ENCODE measurements at regions of chr3 and their contacts with region 1.

Region 1: GRCh38 chr3:78660957-78661356 is 1106.8 kb downstream of the ROBO1 start:
- DNase-seq: no peak
- ATAC-seq: no peak
- H3K4me3 ChIP-seq: no peak overlapping the region
- H3K4me3 Mint-ChIP-seq: no peak overlapping the region
- H3K27ac ChIP-seq: no peak overlapping the region
- H3K27ac Mint-ChIP-seq: no peak overlapping the region
- H3K4me1 ChIP-seq: no peaks in the 10 kb centered on the region
- H3K4me1 Mint-ChIP-seq: no peaks in the 10 kb centered on the region
- H3K27me3 ChIP-seq: no peaks in the 10 kb centered on the region
- H3K27me3 Mint-ChIP-seq: no peaks in the 10 kb centered on the region
- CTCF ChIP-seq: no peak

Region 2: GRCh38 chr3:78076379-78076778 is 584.6 kb before region 1 on chr3:
- CTCF ChIA-PET with region 1: no interaction called
- POLR2A ChIA-PET with region 1: no interaction called
- intact Hi-C with region 1: no loop called
- DNase-seq: no peak
- ATAC-seq: no peak
- H3K4me3 ChIP-seq: no peak overlapping the region
- H3K4me3 Mint-ChIP-seq: no peak overlapping the region
- H3K27ac ChIP-seq: no peak overlapping the region
- H3K27ac Mint-ChIP-seq: no peak overlapping the region
- H3K4me1 ChIP-seq: no peaks in the 10 kb centered on the region
- H3K4me1 Mint-ChIP-seq: no peaks in the 10 kb centered on the region
- H3K27me3 ChIP-seq: no peaks in the 10 kb centered on the region
- H3K27me3 Mint-ChIP-seq: no peaks in the 10 kb centered on the region
- CTCF ChIP-seq: no peak

Region 3: GRCh38 chr3:78818146-78818985 is 157.4 kb after region 1 on chr3:
- CTCF ChIA-PET with region 1: no interaction called
- POLR2A ChIA-PET with region 1: no interaction called
- intact Hi-C with region 1: no loop called
- DNase-seq: no peak
- ATAC-seq: no peak
- H3K4me3 ChIP-seq: no peak overlapping the region
- H3K4me3 Mint-ChIP-seq: no peak overlapping the region
- H3K27ac ChIP-seq: no peak overlapping the region
- H3K27ac Mint-ChIP-seq: no peak overlapping the region
- H3K4me1 ChIP-seq: no peaks in the 10 kb centered on the region
- H3K4me1 Mint-ChIP-seq: no peaks in the 10 kb centered on the region
- H3K27me3 ChIP-seq: no peaks in the 10 kb centered on the region
- H3K27me3 Mint-ChIP-seq: no peaks in the 10 kb centered on the region
- CTCF ChIP-seq: no peak

Region 4: GRCh38 chr3:79032686-79033318 is 371.8 kb after region 1 on chr3:
- CTCF ChIA-PET with region 1: interaction called, 6 read pairs
- POLR2A ChIA-PET with region 1: no interaction called
- intact Hi-C with region 1: loop called in 1 of 2 experiments (anchors 2 kb)
- DNase-seq: peak in 1 of 9 experiments; percentile 53
- ATAC-seq: no peak
- H3K4me3 ChIP-seq: no peak overlapping the region
- H3K4me3 Mint-ChIP-seq: no peak overlapping the region
- H3K27ac ChIP-seq: no peak overlapping the region
- H3K27ac Mint-ChIP-seq: no peak overlapping the region
- H3K4me1 ChIP-seq: no peaks in the 10 kb centered on the region
- H3K4me1 Mint-ChIP-seq: no peaks in the 10 kb centered on the region
- H3K27me3 ChIP-seq: no peaks in the 10 kb centered on the region
- H3K27me3 Mint-ChIP-seq: no peaks in the 10 kb centered on the region
- CTCF ChIP-seq: peak; percentile 40

Region 5: GRCh38 chr3:79361748-79362378 is 700.9 kb after region 1 on chr3:
- CTCF ChIA-PET with region 1: no interaction called
- POLR2A ChIA-PET with region 1: no interaction called
- intact Hi-C with region 1: loop called in 1 of 2 experiments (anchors 5 kb)
- DNase-seq: no peak
- ATAC-seq: no peak
- H3K4me3 ChIP-seq: no peak overlapping the region
- H3K4me3 Mint-ChIP-seq: no peak overlapping the region
- H3K27ac ChIP-seq: no peak overlapping the region
- H3K27ac Mint-ChIP-seq: no peak overlapping the region
- H3K4me1 ChIP-seq: no peaks in the 10 kb centered on the region
- H3K4me1 Mint-ChIP-seq: no peaks in the 10 kb centered on the region
- H3K27me3 ChIP-seq: no peaks in the 10 kb centered on the region
- H3K27me3 Mint-ChIP-seq: no peaks in the 10 kb centered on the region
- CTCF ChIP-seq: peak; percentile 17